Sigmoid colon (tissue), 7 donors: ENCODE measurements at regions of chr21 and their contacts with region 1.

Region 1: GRCh38 chr21:27700974-27701614 is 734.2 kb upstream of the ADAMTS5 start:
- DNase-seq: peak; percentile 91
- H3K4me3 ChIP-seq: no peak overlapping the region
- H3K27ac ChIP-seq: no peak overlapping the region
- H3K4me1 ChIP-seq: peaks cover 0 to 38% (median 16%) of the 10 kb centered on the region in 4 donors
- H3K27me3 ChIP-seq: no peaks in the 10 kb centered on the region
- CTCF ChIP-seq: peak; percentile 66 to 85 (median 76)
- EP300 ChIP-seq: no peak
- POLR2A ChIP-seq: no peak

Region 2: DNA sequence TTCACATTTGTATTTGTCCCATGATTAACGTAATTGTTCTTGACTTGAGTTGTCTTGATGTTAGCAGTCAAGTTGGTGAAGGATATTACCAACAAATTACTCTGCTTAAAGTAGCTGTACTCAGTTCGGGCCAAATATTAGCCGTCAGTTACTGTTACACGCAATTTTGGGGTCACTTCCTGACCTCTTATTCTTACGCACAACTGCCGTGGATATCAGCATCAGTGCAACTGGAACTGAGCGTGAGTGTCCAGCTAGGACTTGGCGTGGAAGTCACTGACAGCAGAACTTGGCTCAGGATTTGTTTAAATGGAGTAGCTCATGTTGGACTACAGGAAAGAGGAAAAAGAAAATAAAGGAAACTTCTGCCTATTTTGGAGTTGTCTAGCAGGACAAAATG is 912.3 kb before region 1 on chr21:
- intact Hi-C with region 1: loop called (anchors 10 kb)
- DNase-seq: peak; percentile 89
- H3K4me3 ChIP-seq: no peak overlapping the region
- H3K27ac ChIP-seq: peak overlapping the region; percentile 33 to 59 (median 50)
- H3K4me1 ChIP-seq: peaks cover 0 to 18% (median under 1%) of the 10 kb centered on the region in 4 donors
- H3K27me3 ChIP-seq: no peaks in the 10 kb centered on the region
- CTCF ChIP-seq: no peak
- EP300 ChIP-seq: peak in 2 of 4 donors; percentile 29 to 61
- POLR2A ChIP-seq: no peak

Region 3: GRCh38 chr21:26850108-26850643 is 850.9 kb before region 1 on chr21:
- intact Hi-C with region 1: loop called (anchors 1 kb)
- DNase-seq: no peak
- H3K4me3 ChIP-seq: no peak overlapping the region
- H3K27ac ChIP-seq: no peak overlapping the region
- H3K4me1 ChIP-seq: peaks cover 0 to 10% (median 3%) of the 10 kb centered on the region in 4 donors
- H3K27me3 ChIP-seq: no peaks in the 10 kb centered on the region
- CTCF ChIP-seq: peak; percentile 71 to 92 (median 83)
- EP300 ChIP-seq: no peak
- POLR2A ChIP-seq: no peak

Region 4: DNA sequence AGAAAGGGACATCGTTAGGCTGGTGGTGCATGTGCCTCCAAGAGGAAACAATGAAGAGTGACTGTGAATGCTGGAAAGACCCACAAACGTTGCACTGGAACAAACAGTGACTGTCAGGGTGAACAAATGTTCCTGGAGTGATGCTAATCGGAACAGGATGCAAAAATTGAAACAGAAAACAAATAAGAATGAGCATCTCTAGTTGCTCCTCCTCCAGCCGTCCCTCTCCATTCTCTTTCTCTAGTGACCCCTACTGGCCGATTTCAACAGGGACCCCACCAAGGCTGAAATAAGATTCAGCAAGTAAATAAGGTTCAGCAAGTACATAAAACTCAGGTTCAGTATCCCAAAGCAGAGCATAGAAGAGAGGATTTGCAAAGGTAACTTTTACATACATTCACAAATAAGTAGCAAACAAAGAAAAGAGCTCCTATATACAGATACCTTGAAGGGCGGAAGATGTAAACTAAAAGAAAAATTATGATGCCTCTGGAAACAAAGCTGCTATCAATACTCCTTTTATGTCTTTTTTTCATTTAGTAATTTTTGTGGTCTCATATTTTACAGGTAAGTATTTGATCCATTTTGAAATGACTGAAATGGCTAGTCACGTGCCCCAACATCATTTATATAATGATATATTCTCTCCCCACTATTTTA is 101.9 kb after region 1 on chr21:
- intact Hi-C with region 1: no loop called
- DNase-seq: no peak
- H3K4me3 ChIP-seq: no peak overlapping the region
- H3K27ac ChIP-seq: peak overlapping the region in 2 of 4 donors; percentile 13 to 36
- H3K4me1 ChIP-seq: peaks cover 0 to 38% (median 14%) of the 10 kb centered on the region in 4 donors
- H3K27me3 ChIP-seq: no peaks in the 10 kb centered on the region
- CTCF ChIP-seq: peak in 3 of 4 experiments; percentile 25 to 42 (median 31)
- EP300 ChIP-seq: no peak
- POLR2A ChIP-seq: no peak

Region 5: DNA sequence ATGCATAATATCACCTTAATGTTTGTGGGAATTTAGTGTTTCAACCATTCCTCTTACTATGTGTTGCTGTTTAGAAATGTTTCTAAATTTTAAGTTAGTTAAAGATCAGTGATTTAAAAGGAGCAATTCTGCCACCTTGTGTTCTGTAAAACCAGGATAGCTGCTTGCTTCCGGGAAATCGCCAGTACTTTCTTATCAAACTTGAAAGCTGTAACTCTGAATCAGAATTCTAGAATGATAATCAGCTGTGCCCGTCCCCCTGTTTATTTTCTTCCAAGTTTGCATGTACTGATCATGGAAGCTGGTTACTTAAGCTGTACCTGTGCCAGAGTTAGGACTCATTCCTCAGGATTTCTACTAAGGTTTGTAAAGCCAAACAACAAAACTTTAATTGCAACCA is 635.2 kb after region 1 on chr21:
- intact Hi-C with region 1: loop called (anchors 5 kb)
- DNase-seq: no peak
- H3K4me3 ChIP-seq: no peak overlapping the region
- H3K27ac ChIP-seq: no peak overlapping the region
- H3K4me1 ChIP-seq: peaks cover 0 to 10% (median 3%) of the 10 kb centered on the region in 4 donors
- H3K27me3 ChIP-seq: no peaks in the 10 kb centered on the region
- CTCF ChIP-seq: peak in 3 of 4 experiments; percentile 28 to 40 (median 34)
- EP300 ChIP-seq: no peak
- POLR2A ChIP-seq: no peak

Region 6: DNA sequence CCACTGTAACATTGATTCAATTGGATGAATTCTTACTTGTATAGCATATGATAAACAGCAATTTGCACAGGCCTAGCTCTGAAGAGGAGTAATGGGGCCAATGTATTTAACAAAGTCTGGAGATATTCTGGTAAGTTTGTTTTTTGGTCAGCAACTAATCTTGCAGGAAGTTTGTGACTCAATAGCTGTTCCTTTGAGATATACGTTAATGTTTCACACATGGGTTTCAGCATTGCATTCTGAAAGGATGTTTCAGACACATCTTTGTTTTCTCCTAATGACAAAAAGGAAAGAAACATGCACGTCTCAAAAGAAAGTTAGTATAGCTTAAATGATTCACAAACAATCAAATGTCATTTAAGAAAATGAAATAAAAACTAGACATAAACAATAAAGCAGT is 1242.5 kb after region 1 on chr21:
- intact Hi-C with region 1: loop called (anchors 5 kb)
- DNase-seq: no peak
- H3K4me3 ChIP-seq: no peak overlapping the region
- H3K27ac ChIP-seq: no peak overlapping the region
- H3K4me1 ChIP-seq: peaks cover 0 to 5% (median 0%) of the 10 kb centered on the region in 4 donors
- H3K27me3 ChIP-seq: no peaks in the 10 kb centered on the region
- CTCF ChIP-seq: no peak
- EP300 ChIP-seq: no peak
- POLR2A ChIP-seq: no peak